CD4-positive, alpha-beta T cell (primary cell): ENCODE measurements at regions of chr9 and their contacts with region 1.

Region 1: GRCh38 chr9:33290247-33291030 is at the start of gene NFX1:
- DNase-seq: peak; percentile 95 to 100 (median 98)
- ATAC-seq: peak; percentile 79
- H3K4me3 ChIP-seq: peak within 1 kb of the TSS; percentile 92
- H3K4me3 Mint-ChIP-seq: peak within 1 kb of the TSS; percentile 88
- H3K27ac ChIP-seq: peak within 1 kb of the TSS; percentile 99 to 100
- H3K27ac Mint-ChIP-seq: peak within 1 kb of the TSS; percentile 99
- H3K4me1 ChIP-seq: peaks cover 55% of the 10 kb centered on the region
- H3K4me1 Mint-ChIP-seq: peaks cover 62% of the 10 kb centered on the region
- H3K27me3 ChIP-seq: no peaks in the 10 kb centered on the region
- H3K27me3 Mint-ChIP-seq: no peaks in the 10 kb centered on the region
- CTCF ChIP-seq: no peak
- total RNA-seq, gene NFX1: 33.1 to 34.1 TPM

Region 2: DNA sequence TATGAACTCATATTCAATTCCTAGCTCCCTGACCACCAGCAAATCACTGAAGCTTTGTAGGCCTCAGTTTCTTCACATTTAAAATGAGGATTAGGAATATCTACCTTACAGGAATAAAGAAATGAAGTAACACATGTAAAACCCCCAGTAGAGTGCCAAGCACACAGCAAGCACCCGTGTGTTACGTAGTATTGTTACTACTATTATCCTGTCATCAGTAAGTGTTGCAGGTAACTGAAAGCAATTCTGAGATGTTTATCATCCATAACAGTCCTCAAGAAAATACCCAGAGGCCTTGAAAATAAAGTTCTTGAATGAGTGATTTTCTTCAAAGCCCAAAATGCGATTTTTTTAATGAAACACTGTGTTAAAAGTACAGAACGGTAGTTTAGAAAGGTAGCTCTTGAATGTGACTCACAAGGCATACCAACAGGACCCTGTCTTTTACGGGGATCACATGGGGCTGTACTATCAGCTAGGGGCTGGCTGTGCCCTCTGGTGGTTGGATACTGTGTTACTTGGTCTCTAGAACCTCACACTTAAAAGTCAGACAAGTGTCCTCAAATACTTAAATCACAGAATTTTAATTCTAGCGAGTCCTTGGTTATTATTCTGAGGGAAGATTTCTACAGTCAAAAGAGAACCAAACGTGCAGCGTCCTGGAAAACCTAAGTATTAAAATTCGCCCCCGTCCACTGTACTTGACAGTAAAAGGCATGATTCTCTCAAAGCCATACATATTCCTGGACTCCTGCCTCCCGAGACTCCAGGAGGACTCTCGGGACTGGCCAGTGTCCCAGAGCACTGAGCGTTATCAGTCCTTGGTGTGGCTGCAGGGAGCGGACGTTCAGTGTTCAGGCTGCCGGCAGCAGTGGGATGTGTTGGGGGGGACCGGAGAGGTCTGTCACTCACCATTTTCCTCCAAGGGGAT is 718.2 kb before region 1 on chr9:
- CTCF ChIA-PET with region 1: no interaction called
- POLR2A ChIA-PET with region 1: no interaction called
- intact Hi-C with region 1: loop called in 1 of 2 experiments (anchors 10 kb)
- DNase-seq: peak; percentile 44 to 92 (median 68)
- ATAC-seq: peak; percentile 84
- H3K4me3 ChIP-seq: peak overlapping the region; percentile 74
- H3K4me3 Mint-ChIP-seq: peak overlapping the region; percentile 99
- H3K27ac ChIP-seq: peak overlapping the region; percentile 74 to 87
- H3K27ac Mint-ChIP-seq: peak overlapping the region; percentile 97
- H3K4me1 ChIP-seq: peaks cover 5% of the 10 kb centered on the region
- H3K4me1 Mint-ChIP-seq: peaks cover 42% of the 10 kb centered on the region
- H3K27me3 ChIP-seq: no peaks in the 10 kb centered on the region
- H3K27me3 Mint-ChIP-seq: no peaks in the 10 kb centered on the region
- CTCF ChIP-seq: peak; percentile 81

Region 3: DNA sequence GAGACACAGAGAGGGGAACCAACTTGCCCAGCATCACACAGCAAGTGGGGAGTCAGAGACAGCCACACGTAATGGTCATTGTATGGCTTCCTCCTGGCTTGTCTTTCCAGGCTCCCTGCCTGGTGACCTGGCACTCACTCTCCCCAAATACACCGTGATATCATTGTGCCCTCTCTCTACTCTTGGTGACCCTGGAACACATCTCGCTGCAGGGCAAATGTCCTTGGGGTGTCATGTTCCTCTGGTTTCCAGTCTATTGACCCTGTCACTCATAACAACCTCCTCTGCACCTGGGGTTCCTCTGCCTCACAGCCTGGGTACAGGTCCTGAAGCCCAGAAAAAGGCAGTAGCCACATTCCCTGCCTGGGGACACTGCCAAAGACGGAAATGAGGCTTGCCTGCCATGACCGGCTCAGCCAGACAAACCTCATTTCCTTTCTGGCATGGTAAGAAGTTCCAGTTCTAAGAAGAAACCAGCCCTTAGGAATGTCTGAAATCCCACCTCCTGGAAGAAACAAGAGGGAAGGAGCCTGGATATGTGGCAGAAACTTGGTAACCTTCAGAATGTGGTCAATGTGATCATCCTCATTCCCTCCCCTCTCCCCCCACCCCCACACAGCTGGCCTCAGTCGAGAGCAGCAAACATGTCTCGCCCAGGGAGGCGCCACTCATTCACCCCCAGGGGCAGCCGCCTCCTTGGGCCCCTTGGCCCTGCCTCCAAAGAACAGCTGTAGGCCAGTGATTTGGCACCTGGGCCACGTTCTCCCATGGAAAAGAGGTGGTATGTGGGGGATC is 183.4 kb before region 1 on chr9:
- CTCF ChIA-PET with region 1: no interaction called
- POLR2A ChIA-PET with region 1: no interaction called
- intact Hi-C with region 1: no loop called
- DNase-seq: no peak
- ATAC-seq: no peak
- H3K4me3 ChIP-seq: no peak overlapping the region
- H3K4me3 Mint-ChIP-seq: no peak overlapping the region
- H3K27ac ChIP-seq: no peak overlapping the region
- H3K27ac Mint-ChIP-seq: no peak overlapping the region
- H3K4me1 ChIP-seq: no peaks in the 10 kb centered on the region
- H3K4me1 Mint-ChIP-seq: no peaks in the 10 kb centered on the region
- H3K27me3 ChIP-seq: no peaks in the 10 kb centered on the region
- H3K27me3 Mint-ChIP-seq: no peaks in the 10 kb centered on the region
- CTCF ChIP-seq: no peak

Region 4: DNA sequence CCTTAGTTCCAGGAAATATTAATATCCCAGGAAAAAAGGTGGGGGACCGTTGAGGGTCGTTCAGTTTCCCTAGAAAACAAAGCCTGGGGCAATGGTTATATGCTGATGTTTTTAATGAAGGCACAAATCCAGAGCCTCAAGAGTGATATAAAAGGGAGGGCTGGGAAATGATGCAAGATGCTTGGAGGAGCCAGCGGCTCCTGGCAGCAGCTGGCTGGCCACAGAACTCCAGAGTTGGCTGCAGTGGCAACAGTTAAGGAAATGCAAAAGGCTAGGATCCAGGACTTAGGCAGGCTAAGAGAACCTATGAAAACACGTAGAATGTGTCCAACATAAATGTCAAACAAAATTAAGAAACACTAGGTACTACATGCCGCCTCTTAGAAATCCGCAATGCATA is 92.3 kb before region 1 on chr9:
- CTCF ChIA-PET with region 1: no interaction called
- POLR2A ChIA-PET with region 1: no interaction called
- intact Hi-C with region 1: no loop called
- DNase-seq: no peak
- ATAC-seq: no peak
- H3K4me3 ChIP-seq: no peak overlapping the region
- H3K4me3 Mint-ChIP-seq: no peak overlapping the region
- H3K27ac ChIP-seq: no peak overlapping the region
- H3K27ac Mint-ChIP-seq: no peak overlapping the region
- H3K4me1 ChIP-seq: peaks cover 11% of the 10 kb centered on the region
- H3K4me1 Mint-ChIP-seq: peaks cover 11% of the 10 kb centered on the region
- H3K27me3 ChIP-seq: no peaks in the 10 kb centered on the region
- H3K27me3 Mint-ChIP-seq: no peaks in the 10 kb centered on the region
- CTCF ChIP-seq: no peak

Region 5: GRCh38 chr9:33264473-33265177 is 25.8 kb before region 1 on chr9 and contains the starts of genes BAG1 and CHMP5:
- CTCF ChIA-PET with region 1: interaction called, 8 read pairs
- POLR2A ChIA-PET with region 1: interaction called, 71 read pairs
- intact Hi-C with region 1: loop called (anchors 1 kb)
- DNase-seq: peak; percentile 99 to 100 (median 100)
- ATAC-seq: peak; percentile 96
- H3K4me3 ChIP-seq: peak within 1 kb of the TSS; percentile 94
- H3K4me3 Mint-ChIP-seq: peak within 1 kb of the TSS; percentile 96
- H3K27ac ChIP-seq: peak within 1 kb of the TSS; percentile 59 to 86
- H3K27ac Mint-ChIP-seq: peak within 1 kb of the TSS; percentile 91
- H3K4me1 ChIP-seq: peaks cover 31% of the 10 kb centered on the region
- H3K4me1 Mint-ChIP-seq: peaks cover 63% of the 10 kb centered on the region
- H3K27me3 ChIP-seq: no peaks in the 10 kb centered on the region
- H3K27me3 Mint-ChIP-seq: no peaks in the 10 kb centered on the region
- CTCF ChIP-seq: no peak
- total RNA-seq, gene BAG1: 58.0 to 61.4 TPM
- total RNA-seq, gene CHMP5: 17.4 to 18.6 TPM

Region 6: DNA sequence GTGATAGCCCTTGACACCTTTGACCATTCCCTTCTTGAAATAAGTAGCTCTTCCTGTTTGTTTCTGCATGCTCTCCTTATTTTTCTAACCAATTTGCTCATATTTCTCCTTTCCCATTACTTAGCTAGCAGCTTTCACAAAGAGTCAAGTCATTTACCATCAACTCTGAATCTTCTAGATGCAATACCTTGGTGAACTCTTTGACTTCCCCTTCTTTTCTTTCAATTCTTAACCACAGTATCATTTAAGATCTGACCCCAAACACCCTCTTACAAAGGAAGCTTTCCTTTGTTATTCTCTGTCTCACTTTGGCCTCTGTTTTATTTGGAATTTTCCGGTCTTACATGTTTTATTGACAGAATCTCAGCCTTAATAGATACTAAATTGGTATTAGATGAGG is 13.9 kb after region 1 on chr9:
- CTCF ChIA-PET with region 1: interaction called, 6 read pairs
- POLR2A ChIA-PET with region 1: interaction called, 12 read pairs
- intact Hi-C with region 1: no loop called
- DNase-seq: no peak
- ATAC-seq: no peak
- H3K4me3 ChIP-seq: no peak overlapping the region
- H3K4me3 Mint-ChIP-seq: no peak overlapping the region
- H3K27ac ChIP-seq: no peak overlapping the region
- H3K27ac Mint-ChIP-seq: no peak overlapping the region
- H3K4me1 ChIP-seq: peaks cover 2% of the 10 kb centered on the region
- H3K4me1 Mint-ChIP-seq: peaks cover 20% of the 10 kb centered on the region
- H3K27me3 ChIP-seq: no peaks in the 10 kb centered on the region
- H3K27me3 Mint-ChIP-seq: no peaks in the 10 kb centered on the region
- CTCF ChIP-seq: no peak

Region 7: GRCh38 chr9:33364127-33364526 is 73.7 kb after region 1 on chr9:
- CTCF ChIA-PET with region 1: no interaction called
- POLR2A ChIA-PET with region 1: no interaction called
- intact Hi-C with region 1: no loop called
- DNase-seq: no peak
- ATAC-seq: no peak
- H3K4me3 ChIP-seq: no peak overlapping the region
- H3K4me3 Mint-ChIP-seq: no peak overlapping the region
- H3K27ac ChIP-seq: no peak overlapping the region
- H3K27ac Mint-ChIP-seq: no peak overlapping the region
- H3K4me1 ChIP-seq: no peaks in the 10 kb centered on the region
- H3K4me1 Mint-ChIP-seq: no peaks in the 10 kb centered on the region
- H3K27me3 ChIP-seq: no peaks in the 10 kb centered on the region
- H3K27me3 Mint-ChIP-seq: no peaks in the 10 kb centered on the region
- CTCF ChIP-seq: no peak

Region 8: GRCh38 chr9:33446946-33447798 is 156.7 kb after region 1 on chr9 and contains the start of gene AQP3:
- CTCF ChIA-PET with region 1: no interaction called
- POLR2A ChIA-PET with region 1: interaction called, 19 read pairs
- intact Hi-C with region 1: loop called in 1 of 2 experiments (anchors 1 kb)
- DNase-seq: peak; percentile 63 to 89 (median 75)
- ATAC-seq: peak; percentile 51
- H3K4me3 ChIP-seq: peak within 1 kb of the TSS; percentile 90
- H3K4me3 Mint-ChIP-seq: peak within 1 kb of the TSS; percentile 97
- H3K27ac ChIP-seq: peak within 1 kb of the TSS; percentile 83 to 91
- H3K27ac Mint-ChIP-seq: peak within 1 kb of the TSS; percentile 99
- H3K4me1 ChIP-seq: peaks cover 69% of the 10 kb centered on the region
- H3K4me1 Mint-ChIP-seq: peaks cover 52% of the 10 kb centered on the region
- H3K27me3 ChIP-seq: no peaks in the 10 kb centered on the region
- H3K27me3 Mint-ChIP-seq: no peaks in the 10 kb centered on the region
- CTCF ChIP-seq: peak; percentile 53
- total RNA-seq, gene AQP3: 99.8 to 106 TPM

Region 9: GRCh38 chr9:33473643-33474352 is 183.4 kb after region 1 on chr9 and contains the start of gene NOL6:
- CTCF ChIA-PET with region 1: no interaction called
- POLR2A ChIA-PET with region 1: interaction called, 34 read pairs
- intact Hi-C with region 1: loop called (anchors 1 to 5 kb)
- DNase-seq: peak; percentile 96 to 99 (median 97)
- ATAC-seq: peak; percentile 99
- H3K4me3 ChIP-seq: peak within 1 kb of the TSS; percentile 92
- H3K4me3 Mint-ChIP-seq: peak within 1 kb of the TSS; percentile 99
- H3K27ac ChIP-seq: peak within 1 kb of the TSS; percentile 58 to 64
- H3K27ac Mint-ChIP-seq: peak within 1 kb of the TSS; percentile 89
- H3K4me1 ChIP-seq: peaks cover 25% of the 10 kb centered on the region
- H3K4me1 Mint-ChIP-seq: peaks cover 33% of the 10 kb centered on the region
- H3K27me3 ChIP-seq: no peaks in the 10 kb centered on the region
- H3K27me3 Mint-ChIP-seq: no peaks in the 10 kb centered on the region
- CTCF ChIP-seq: no peak
- total RNA-seq, gene NOL6: 30.5 to 30.6 TPM